ENCODE measurements at regions of chr3 and their contacts with region 1.

Region 1: GRCh38 chr3:23945903-23946751 is 1.0 kb downstream of the NR1D2 start:
- DNase-seq: peak; percentile 99
- ATAC-seq: peak; percentile 84
- H3K4me3 ChIP-seq: peak overlapping the region; percentile 59
- H3K27ac ChIP-seq: peak overlapping the region; percentile 82
- H3K4me1 ChIP-seq: peaks cover 17 to 46% of the 10 kb centered on the region in 2 experiments
- H3K27me3 ChIP-seq: no peaks in the 10 kb centered on the region
- CTCF ChIP-seq: no peak
- EP300 ChIP-seq: no peak; the same call in 1 of the 2 replicates
- POLR2A ChIP-seq: peak; percentile 73
- RAD21 ChIP-seq: peak in 1 of 2 experiments; percentile 3; a peak in 2 of 4 replicates

Region 2: GRCh38 chr3:23712656-23713559 is 233.2 kb before region 1 on chr3:
- CTCF ChIA-PET with region 1: no interaction called
- POLR2A ChIA-PET with region 1: no interaction called
- in situ Hi-C with region 1: no loop called
- intact Hi-C with region 1: no loop called
- DNase-seq: peak in 1 of 4 experiments; percentile 19
- ATAC-seq: peak; percentile 71
- H3K4me3 ChIP-seq: no peak overlapping the region
- H3K27ac ChIP-seq: no peak overlapping the region
- H3K4me1 ChIP-seq: no peaks in the 10 kb centered on the region
- H3K27me3 ChIP-seq: peaks cover 14 to 26% of the 10 kb centered on the region in 2 experiments; a peak in 4 of 5 replicates
- CTCF ChIP-seq: peak; percentile 9 to 25 (median 12); a peak in 3 of 6 replicates
- EP300 ChIP-seq: no peak
- POLR2A ChIP-seq: no peak
- RAD21 ChIP-seq: peak in 1 of 2 experiments; percentile 47; a peak in 3 of 4 replicates

Region 3: DNA sequence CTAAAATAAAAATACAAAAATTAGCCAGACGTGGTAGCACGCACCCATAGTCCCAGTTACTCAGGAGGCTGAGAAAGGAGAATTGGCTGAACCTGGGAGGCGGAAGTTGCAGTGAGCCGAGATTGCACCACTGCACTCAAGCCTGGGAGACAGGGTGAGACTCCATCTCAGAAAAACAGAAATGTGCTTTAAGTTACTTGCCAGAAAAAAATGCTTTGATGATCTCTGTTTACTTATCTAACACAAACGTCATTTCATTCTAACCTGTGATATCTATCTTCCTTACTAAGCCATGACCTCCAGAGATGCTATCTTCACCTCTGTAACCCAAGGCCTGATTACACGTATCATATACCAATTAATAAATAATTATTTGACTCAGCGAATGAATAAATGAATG is 36.8 kb before region 1 on chr3:
- CTCF ChIA-PET with region 1: no interaction called
- POLR2A ChIA-PET with region 1: no interaction called
- in situ Hi-C with region 1: no loop called
- intact Hi-C with region 1: loop called (anchors 5 kb)
- DNase-seq: no peak
- ATAC-seq: no peak
- H3K4me3 ChIP-seq: no peak overlapping the region
- H3K27ac ChIP-seq: no peak overlapping the region
- H3K4me1 ChIP-seq: peaks cover 2 to 9% of the 10 kb centered on the region in 2 experiments; a peak in 4 of 5 replicates
- H3K27me3 ChIP-seq: no peaks in the 10 kb centered on the region
- CTCF ChIP-seq: no peak
- EP300 ChIP-seq: no peak
- POLR2A ChIP-seq: no peak
- RAD21 ChIP-seq: no peak

Measured in K562 (cell line).